Right ventricle myocardium superior (tissue), 1 donor: ENCODE measurements at regions of chr21 and their contacts with region 1.

Region 1: DNA sequence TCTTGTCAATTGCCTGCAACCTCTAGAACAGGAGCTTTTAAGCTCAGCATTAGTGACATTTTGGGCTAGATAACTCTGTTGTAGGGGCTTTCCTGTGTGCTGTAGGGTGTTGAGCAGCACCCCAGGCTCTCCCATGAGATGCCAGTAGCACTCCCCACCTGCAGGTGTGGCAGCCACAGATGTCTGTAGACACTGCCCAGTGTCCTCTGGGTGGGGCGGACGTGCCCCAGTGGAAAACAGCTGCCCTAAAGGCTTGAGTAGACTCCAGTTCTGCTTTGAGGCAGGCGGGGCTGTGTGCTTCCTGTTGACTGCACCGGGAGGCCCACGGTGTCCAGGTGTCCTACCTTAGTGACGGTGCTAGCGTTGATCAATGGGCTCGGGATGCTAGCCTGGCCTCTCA is 16.9 kb upstream of the PWP2 start:
- DNase-seq: no peak
- ATAC-seq: no peak

Region 2: GRCh38 chr21:44024887-44025362 is 65.4 kb before region 1 on chr21:
- intact Hi-C with region 1: loop called (anchors 10 kb)
- DNase-seq: peak; percentile 80
- ATAC-seq: peak; percentile 77